H1 (cell line): ENCODE measurements at regions of chr4 and their contacts with region 1.

Region 1: DNA sequence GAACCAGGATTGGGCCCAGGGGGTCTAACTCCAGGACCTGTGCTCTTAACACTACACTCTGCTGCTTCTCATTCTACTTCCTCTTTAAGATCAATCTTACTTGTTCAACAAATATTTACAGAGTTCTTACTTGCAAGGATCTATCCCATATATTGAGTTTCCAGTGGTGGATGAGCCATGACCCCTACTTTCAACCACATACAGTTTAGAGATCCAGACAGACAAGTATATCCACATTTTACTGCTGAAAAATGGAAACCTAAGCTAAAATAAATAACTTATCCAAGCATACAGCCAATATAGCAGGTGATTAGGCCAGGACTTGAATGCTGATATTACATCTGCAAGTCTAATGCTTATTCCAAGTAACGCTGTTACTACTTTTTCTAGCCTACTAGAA is 18.7 kb downstream of the TMEM150C start:
- DNase-seq: no peak
- H3K4me3 ChIP-seq: no peak overlapping the region
- H3K27ac ChIP-seq: no peak overlapping the region
- H3K4me1 ChIP-seq: no peaks in the 10 kb centered on the region
- H3K27me3 ChIP-seq: no peaks in the 10 kb centered on the region
- CTCF ChIP-seq: no peak
- EP300 ChIP-seq: no peak
- POLR2A ChIP-seq: no peak
- RAD21 ChIP-seq: no peak

Region 2: DNA sequence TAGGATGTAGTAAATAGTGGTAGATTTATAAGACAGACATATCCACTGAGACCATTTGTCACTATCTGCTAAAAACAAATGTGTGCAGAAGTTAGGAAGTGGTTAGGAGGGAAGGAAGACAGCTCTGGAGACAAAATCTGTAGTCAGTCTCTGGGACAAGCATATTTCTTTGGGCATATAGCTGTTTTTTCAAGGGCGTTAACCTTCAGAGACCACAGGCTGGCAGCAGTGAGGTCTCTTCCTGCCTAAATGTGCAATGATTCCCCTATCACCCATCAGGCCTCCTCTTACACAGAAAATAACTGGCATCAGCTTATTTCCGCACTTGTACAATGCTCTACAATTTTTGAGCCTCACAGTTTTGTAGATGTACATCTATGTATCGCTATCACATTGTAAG is 12.2 kb after region 1 on chr4:
- CTCF ChIA-PET with region 1: interaction called, 10 read pairs
- POLR2A ChIA-PET with region 1: interaction called, 3 read pairs
- DNase-seq: no peak
- H3K4me3 ChIP-seq: no peak overlapping the region
- H3K27ac ChIP-seq: no peak overlapping the region
- H3K4me1 ChIP-seq: no peaks in the 10 kb centered on the region
- H3K27me3 ChIP-seq: no peaks in the 10 kb centered on the region; a peak in 1 of 7 replicates
- CTCF ChIP-seq: peak; percentile 6 to 60 (median 43)
- EP300 ChIP-seq: no peak
- POLR2A ChIP-seq: no peak
- RAD21 ChIP-seq: peak; percentile 51 to 55